Activated naive CD4-positive, alpha-beta T cell treated with anti-CD3 and anti-CD28 coated beads for 36 hours (primary cell): ENCODE measurements at regions of chr2 and their contacts with region 1.

Region 1: DNA sequence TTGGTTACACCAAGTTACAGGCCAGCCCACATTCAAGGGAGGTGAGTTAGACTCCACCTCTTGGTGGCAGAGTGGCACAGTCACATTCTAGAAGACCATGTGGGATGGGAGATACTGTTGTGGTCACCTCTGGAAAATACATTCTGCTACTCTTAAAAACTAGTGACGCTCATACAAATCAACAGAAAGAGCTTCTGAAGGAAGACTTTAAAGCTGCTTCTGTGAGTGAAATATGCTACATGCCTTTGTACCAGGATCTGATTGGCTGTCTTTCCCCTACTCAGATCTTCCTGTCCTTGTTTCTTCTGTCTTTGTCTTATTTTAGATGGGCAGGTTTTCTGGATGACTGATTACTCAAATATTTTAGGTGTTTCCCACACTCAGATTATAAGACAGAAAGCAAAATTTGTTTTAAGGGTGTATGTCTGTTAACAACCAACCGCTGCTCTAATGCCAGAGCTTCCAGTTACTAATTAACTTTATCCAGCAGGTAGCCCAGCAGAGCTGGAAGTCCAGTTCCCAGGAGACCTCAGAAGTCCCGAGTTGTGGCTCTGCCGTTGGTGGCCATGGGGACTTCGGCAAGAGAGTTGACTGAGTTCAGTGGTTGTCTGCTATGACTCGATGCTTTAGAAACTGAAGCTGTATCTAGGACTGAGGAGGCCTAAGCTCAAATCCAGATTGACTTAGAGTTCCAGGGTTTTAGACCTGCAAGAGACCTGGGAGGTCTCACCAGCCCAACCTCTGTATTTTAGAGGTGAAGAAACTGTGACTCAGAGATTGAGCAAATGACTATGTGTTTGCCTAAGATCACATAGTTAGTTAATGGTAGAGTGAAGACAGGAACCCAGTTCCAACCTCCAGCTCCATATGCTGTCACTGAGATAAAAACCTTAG is 7.4 kb downstream of the IL1R2 start:
- DNase-seq: peak; percentile 73
- H3K4me3 Mint-ChIP-seq: peak overlapping the region; percentile 42
- H3K27ac Mint-ChIP-seq: peak overlapping the region; percentile 90
- H3K4me1 Mint-ChIP-seq: peaks cover 38% of the 10 kb centered on the region
- H3K27me3 Mint-ChIP-seq: no peaks in the 10 kb centered on the region

Region 2: DNA sequence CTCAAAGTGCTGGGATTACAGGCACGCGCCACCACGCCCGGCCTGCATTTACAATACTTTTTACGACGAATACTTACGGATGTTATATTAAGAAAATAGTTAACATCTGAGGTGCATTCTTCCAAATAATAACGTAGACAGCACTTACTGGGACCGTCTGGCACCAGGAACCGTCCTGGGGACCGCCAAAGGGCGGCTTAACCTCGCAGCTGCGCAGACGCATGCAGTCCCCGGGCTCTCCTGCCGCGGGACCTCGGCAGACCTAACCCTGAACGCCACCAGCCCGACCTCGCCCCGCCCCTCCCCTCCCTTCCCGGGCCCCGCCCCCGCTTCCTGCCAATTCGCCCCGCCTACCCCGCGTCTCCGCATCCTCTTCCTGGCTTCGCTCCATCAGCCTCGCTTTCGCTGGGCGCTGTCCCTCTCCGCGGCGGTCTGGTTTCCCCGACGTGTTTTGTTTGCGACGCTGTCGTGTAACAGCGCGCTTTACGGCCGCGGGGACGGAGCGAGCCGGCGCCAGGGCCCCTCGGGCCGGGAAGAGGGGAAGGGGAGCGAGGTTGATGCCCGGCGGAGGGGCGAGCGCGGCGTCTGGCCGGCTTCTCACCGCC is 746.6 kb before region 1 on chr2 and contains the start of gene CNOT11:
- CTCF ChIA-PET with region 1: no interaction called
- intact Hi-C with region 1: loop called (anchors 2 kb)
- DNase-seq: peak; percentile 99
- H3K4me3 Mint-ChIP-seq: peak within 1 kb of the TSS; percentile 98
- H3K27ac Mint-ChIP-seq: peak within 1 kb of the TSS; percentile 93
- H3K4me1 Mint-ChIP-seq: peaks cover 39% of the 10 kb centered on the region
- H3K27me3 Mint-ChIP-seq: no peaks in the 10 kb centered on the region
- total RNA-seq, gene CNOT11: 38.3 to 40.3 TPM

Region 3: GRCh38 chr2:101717071-101717845 is 281.9 kb before region 1 on chr2:
- CTCF ChIA-PET with region 1: no interaction called
- intact Hi-C with region 1: loop called (anchors 5 kb)
- DNase-seq: peak; percentile 75
- H3K4me3 Mint-ChIP-seq: peak overlapping the region; percentile 38
- H3K27ac Mint-ChIP-seq: peak overlapping the region; percentile 95
- H3K4me1 Mint-ChIP-seq: peaks cover 92% of the 10 kb centered on the region
- H3K27me3 Mint-ChIP-seq: no peaks in the 10 kb centered on the region

Region 4: GRCh38 chr2:101759162-101759561 is 240.0 kb before region 1 on chr2:
- CTCF ChIA-PET with region 1: no interaction called
- intact Hi-C with region 1: no loop called
- DNase-seq: no peak
- H3K4me3 Mint-ChIP-seq: no peak overlapping the region
- H3K27ac Mint-ChIP-seq: no peak overlapping the region
- H3K4me1 Mint-ChIP-seq: peaks cover 75% of the 10 kb centered on the region
- H3K27me3 Mint-ChIP-seq: no peaks in the 10 kb centered on the region

Region 5: DNA sequence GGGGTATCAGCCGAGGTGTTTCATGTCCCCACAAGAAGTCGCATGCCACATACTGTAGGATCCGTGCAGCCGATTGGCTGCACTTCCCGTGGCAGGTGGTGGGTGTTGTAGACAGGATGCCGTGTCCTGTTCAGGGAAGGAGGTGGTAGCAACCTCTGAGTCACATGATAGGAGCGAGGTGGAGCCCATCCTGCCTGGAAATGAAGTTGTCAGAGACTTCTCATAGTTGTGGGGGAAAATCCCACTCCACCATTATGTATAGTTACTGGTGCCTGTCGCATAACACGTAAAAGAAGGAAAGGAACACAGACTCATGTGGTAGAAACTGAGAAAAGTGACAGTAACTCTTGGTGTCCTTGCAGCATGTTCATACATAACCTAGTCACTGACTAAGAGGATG is 98.8 kb before region 1 on chr2:
- CTCF ChIA-PET with region 1: interaction called, 10 read pairs
- intact Hi-C with region 1: loop called (anchors 1 kb)
- DNase-seq: peak; percentile 87
- H3K4me3 Mint-ChIP-seq: no peak overlapping the region
- H3K27ac Mint-ChIP-seq: peak overlapping the region; percentile 87
- H3K4me1 Mint-ChIP-seq: peaks cover 33% of the 10 kb centered on the region
- H3K27me3 Mint-ChIP-seq: peaks cover 2% of the 10 kb centered on the region

Region 6: DNA sequence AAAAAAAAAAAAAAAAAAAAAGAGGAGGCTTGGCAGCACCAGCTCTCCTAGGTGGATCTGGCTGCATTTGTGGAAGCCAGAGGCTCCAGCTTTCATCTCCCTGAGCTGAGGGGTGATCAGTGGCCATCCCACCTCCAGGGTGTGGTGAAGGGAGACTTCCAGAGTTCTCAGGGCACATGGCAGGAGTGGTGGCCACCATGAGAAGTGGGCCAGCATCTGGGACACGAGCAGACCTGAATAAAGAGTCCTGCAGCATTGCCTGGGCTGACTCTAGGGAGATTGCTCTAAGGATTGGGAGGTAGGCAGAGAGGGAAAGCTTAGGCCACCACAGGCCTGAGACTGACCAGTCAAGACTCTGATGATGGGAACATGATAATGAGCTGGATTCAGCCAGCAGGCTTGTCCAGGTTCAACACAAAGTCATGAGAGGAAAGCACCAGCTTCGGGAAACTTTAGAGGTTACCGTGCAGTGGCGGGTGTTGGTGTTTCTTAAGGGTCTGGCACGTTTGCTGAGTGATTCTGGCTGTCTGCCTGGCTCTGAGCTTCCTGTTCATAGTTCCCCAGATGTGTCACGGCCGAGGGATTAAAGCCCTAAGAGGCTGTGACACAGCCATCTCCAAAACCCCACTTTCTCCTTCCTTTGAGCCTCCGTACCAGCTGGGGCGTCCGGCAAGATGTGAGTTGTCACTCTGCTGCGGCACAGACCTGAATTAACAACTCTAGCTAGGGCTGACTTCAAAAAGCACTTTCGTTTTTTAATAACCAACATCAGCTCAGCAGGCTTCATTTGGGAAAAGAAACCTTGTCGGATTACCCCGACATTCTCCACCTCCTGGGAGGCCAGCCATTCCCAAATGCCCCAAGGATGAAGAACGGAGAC is 105.1 kb after region 1 on chr2:
- CTCF ChIA-PET with region 1: no interaction called
- intact Hi-C with region 1: loop called (anchors 1 kb)
- DNase-seq: peak; percentile 96
- H3K4me3 Mint-ChIP-seq: peak overlapping the region; percentile 71
- H3K27ac Mint-ChIP-seq: peak overlapping the region; percentile 86
- H3K4me1 Mint-ChIP-seq: peaks cover 36% of the 10 kb centered on the region
- H3K27me3 Mint-ChIP-seq: peaks cover 2% of the 10 kb centered on the region

Region 7: DNA sequence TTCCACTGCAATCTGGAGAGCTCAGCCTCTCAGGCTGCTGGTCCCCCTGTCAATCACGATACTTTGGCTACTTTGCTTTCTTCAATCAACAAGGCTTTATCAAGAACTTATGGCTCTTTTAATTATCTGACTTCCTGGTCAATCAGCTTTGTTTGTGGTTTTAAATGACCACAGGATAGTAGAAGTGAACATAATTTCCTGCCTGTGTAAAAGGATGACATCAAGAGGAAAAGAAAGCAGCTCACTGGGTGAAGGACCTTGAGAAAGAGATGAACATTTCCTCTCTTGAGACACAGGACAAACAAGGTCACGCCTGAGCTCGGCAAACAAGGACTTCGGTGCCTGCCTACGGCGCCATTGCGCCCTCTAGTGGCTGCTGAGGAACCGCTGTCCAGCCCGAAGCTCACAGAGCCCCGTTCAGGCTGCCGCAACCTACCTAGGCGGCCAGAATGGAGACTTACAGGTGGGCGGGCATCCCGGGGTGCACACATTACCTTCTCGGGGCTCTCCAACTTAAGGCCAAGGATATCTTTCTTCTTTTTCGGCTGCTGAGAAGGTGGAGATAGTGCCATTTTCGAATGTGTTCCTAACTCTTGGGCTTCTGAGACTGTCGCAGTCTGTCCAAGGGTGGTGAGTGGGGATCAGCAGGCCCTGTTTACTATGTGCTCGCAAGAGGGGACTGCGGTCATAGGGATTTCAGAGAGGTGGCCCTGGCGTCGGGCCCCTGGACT is 241.7 kb after region 1 on chr2:
- CTCF ChIA-PET with region 1: interaction called, 13 read pairs
- intact Hi-C with region 1: no loop called
- DNase-seq: peak; percentile 92
- H3K4me3 Mint-ChIP-seq: no peak overlapping the region
- H3K27ac Mint-ChIP-seq: peak overlapping the region; percentile 7
- H3K4me1 Mint-ChIP-seq: peaks cover 31% of the 10 kb centered on the region
- H3K27me3 Mint-ChIP-seq: no peaks in the 10 kb centered on the region

Region 8: DNA sequence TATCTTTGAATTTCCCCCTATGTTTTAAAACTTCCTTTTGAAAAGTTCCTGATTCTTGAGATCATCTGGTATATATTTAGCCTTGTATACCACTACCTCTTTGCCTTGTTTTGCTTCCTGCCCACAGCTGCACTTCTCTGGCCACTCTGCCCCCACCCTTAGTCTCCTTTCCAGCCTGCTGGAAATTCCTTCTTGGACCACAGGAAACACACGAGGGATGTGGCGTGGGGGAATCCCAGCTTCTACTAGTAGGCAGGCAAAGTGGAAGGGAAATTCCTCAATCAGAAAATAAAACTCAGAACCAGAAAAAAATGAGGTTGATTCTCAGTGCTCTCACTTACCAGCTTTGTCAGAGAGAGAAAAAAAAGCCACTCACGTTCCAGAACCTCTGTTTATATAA is 437.2 kb after region 1 on chr2:
- CTCF ChIA-PET with region 1: no interaction called
- intact Hi-C with region 1: loop called (anchors 2 kb)
- DNase-seq: peak; percentile 56
- H3K4me3 Mint-ChIP-seq: no peak overlapping the region
- H3K27ac Mint-ChIP-seq: peak overlapping the region; percentile 68
- H3K4me1 Mint-ChIP-seq: peaks cover 27% of the 10 kb centered on the region
- H3K27me3 Mint-ChIP-seq: no peaks in the 10 kb centered on the region

Region 9: GRCh38 chr2:102449370-102449974 is 450.3 kb after region 1 on chr2:
- CTCF ChIA-PET with region 1: no interaction called
- intact Hi-C with region 1: no loop called
- DNase-seq: peak; percentile 86
- H3K4me3 Mint-ChIP-seq: no peak overlapping the region
- H3K27ac Mint-ChIP-seq: no peak overlapping the region
- H3K4me1 Mint-ChIP-seq: peaks cover 2% of the 10 kb centered on the region
- H3K27me3 Mint-ChIP-seq: no peaks in the 10 kb centered on the region